BJ (cell line): ENCODE measurements at regions of chr2 and their contacts with region 1.

Region 1: GRCh38 chr2:27303093-27304025 is 4.9 kb downstream of the UCN start:
- DNase-seq: no peak
- H3K4me3 ChIP-seq: no peak overlapping the region
- H3K27me3 ChIP-seq: peaks cover 17% of the 10 kb centered on the region
- CTCF ChIP-seq: peak; percentile 87

Region 2: DNA sequence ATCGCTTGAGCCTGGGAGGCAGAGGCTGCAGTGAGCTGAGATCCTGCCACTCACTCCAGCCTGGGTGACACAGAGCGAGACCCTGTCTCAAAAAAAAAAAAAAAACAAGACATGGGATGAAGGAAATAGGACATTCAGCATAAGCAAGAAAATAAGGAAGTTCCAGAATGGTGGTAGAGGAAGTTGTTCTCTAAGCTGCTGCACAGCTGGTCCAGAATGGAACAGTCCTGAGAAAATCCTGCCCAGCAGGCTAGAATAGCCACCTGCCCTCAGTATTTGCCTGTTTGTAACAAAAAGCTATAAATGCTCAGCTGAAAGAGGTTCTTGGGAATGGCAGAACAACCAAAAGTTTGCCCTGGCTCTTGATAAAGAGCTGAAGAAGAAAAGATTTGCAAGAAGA is 344.0 kb before region 1 on chr2:
- CTCF ChIA-PET with region 1: interaction called, 10 read pairs
- POLR2A ChIA-PET with region 1: no interaction called
- DNase-seq: no peak
- H3K4me3 ChIP-seq: no peak overlapping the region
- H3K27me3 ChIP-seq: peaks cover 20% of the 10 kb centered on the region
- CTCF ChIP-seq: no peak

Region 3: GRCh38 chr2:27249891-27250651 is 53.3 kb before region 1 on chr2:
- CTCF ChIA-PET with region 1: interaction called, 14 read pairs
- POLR2A ChIA-PET with region 1: no interaction called
- DNase-seq: no peak
- H3K4me3 ChIP-seq: no peak overlapping the region
- H3K27me3 ChIP-seq: peaks cover 13% of the 10 kb centered on the region
- CTCF ChIP-seq: peak; percentile 76

Region 4: GRCh38 chr2:27281855-27282559 is 21.4 kb before region 1 on chr2 and contains the start of gene TRIM54:
- CTCF ChIA-PET with region 1: interaction called, 51 read pairs
- POLR2A ChIA-PET with region 1: no interaction called
- DNase-seq: no peak
- H3K4me3 ChIP-seq: no peak within 1 kb of the TSS
- H3K27me3 ChIP-seq: peaks cover 10% of the 10 kb centered on the region
- CTCF ChIP-seq: no peak
- polyA plus RNA-seq, gene TRIM54: 0.05 TPM in 1 of 2 replicates, not detected in the other

Region 5: DNA sequence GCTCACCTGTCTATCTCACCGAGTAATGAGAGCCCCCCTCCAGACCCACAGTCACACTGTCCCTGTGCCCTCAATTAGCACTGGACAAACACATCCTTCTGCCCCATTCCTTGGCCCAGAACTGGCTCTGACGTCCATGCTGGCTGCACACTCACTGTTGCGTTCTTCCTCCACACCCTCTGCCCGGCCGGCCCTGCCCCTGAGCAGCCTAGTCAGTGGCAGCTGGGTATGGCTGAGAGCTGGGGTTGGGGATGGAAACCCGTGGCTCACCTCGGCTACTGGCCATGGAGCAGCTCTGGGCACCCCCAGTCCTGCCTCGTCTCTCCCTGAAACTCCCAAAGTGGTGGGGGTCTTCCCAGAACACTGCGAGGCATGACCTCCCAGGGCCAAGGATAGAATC is 11.3 kb after region 1 on chr2:
- CTCF ChIA-PET with region 1: interaction called, 34 read pairs
- POLR2A ChIA-PET with region 1: no interaction called
- DNase-seq: no peak
- H3K4me3 ChIP-seq: no peak overlapping the region
- H3K27me3 ChIP-seq: no peaks in the 10 kb centered on the region
- CTCF ChIP-seq: no peak

Region 6: DNA sequence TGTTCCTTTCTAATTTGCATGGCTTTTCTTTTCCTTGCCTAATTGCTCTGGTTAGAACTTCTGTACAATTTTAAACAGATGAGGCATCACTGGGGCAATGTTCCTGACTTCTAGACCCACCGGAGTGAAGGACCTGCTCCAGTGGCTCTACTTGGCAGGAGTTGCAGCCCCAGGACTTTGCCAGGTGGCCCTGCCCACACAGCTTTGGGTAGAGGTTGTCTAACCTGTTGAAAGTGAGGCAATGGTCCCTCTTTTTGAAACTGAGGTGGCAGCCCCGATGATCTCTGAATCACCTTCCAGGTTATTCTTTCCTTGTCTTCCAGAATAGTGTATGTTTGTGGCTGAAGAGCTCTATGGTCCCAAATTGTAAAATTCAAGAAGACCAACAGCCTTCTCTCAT is 249.6 kb after region 1 on chr2:
- CTCF ChIA-PET with region 1: no interaction called
- POLR2A ChIA-PET with region 1: no interaction called
- DNase-seq: no peak
- H3K4me3 ChIP-seq: no peak overlapping the region
- H3K27me3 ChIP-seq: peaks cover 5% of the 10 kb centered on the region
- CTCF ChIP-seq: no peak

Region 7: GRCh38 chr2:27628767-27629709 is 325.7 kb after region 1 on chr2 and contains the starts of genes CCDC121 and GPN1:
- CTCF ChIA-PET with region 1: no interaction called
- POLR2A ChIA-PET with region 1: no interaction called
- DNase-seq: peak; percentile 73
- H3K4me3 ChIP-seq: peak within 1 kb of the TSS; percentile 69
- H3K27me3 ChIP-seq: no peaks in the 10 kb centered on the region
- CTCF ChIP-seq: no peak
- polyA plus RNA-seq, gene CCDC121: 0.58 and 0.86 TPM in 2 replicates
- polyA plus RNA-seq, gene GPN1: 40.8 and 61.0 TPM in 2 replicates